ENCODE measurements at regions of chr2 and their contacts with region 1.

Region 1: DNA sequence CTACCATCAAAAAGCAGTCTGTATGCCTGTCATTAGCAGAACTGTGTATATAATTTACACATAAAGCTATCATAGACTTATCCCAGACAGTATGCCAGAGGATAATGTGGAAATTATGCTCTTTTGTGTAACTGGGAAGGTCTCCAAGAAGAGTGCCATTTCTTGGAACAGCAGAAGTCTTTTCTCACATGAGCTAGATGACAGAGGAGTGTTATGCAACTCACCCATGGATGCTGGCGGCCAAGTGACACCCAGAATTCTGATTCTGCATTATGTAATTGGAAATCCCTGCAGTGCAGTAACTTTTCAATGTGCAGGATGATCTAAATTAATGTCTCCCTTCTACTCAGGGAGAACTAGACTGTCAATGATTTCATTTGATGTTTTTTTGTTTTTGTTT is 160.0 kb downstream of the UBE2E3 start:
- DNase-seq: no peak
- H3K4me3 Mint-ChIP-seq: peak overlapping the region; percentile 3
- H3K27ac Mint-ChIP-seq: peak overlapping the region; percentile 74
- H3K4me1 Mint-ChIP-seq: peaks cover 63% of the 10 kb centered on the region
- H3K27me3 Mint-ChIP-seq: no peaks in the 10 kb centered on the region

Region 2: GRCh38 chr2:181123798-181124231 is 16.6 kb before region 1 on chr2:
- CTCF ChIA-PET with region 1: interaction called, 6 read pairs
- POLR2A ChIA-PET with region 1: interaction called, 8 read pairs
- intact Hi-C with region 1: loop called (anchors 1 kb)
- DNase-seq: peak; percentile 67
- H3K4me3 Mint-ChIP-seq: peak overlapping the region; percentile 74
- H3K27ac Mint-ChIP-seq: peak overlapping the region; percentile 92
- H3K4me1 Mint-ChIP-seq: peaks cover 60% of the 10 kb centered on the region
- H3K27me3 Mint-ChIP-seq: no peaks in the 10 kb centered on the region

Region 3: DNA sequence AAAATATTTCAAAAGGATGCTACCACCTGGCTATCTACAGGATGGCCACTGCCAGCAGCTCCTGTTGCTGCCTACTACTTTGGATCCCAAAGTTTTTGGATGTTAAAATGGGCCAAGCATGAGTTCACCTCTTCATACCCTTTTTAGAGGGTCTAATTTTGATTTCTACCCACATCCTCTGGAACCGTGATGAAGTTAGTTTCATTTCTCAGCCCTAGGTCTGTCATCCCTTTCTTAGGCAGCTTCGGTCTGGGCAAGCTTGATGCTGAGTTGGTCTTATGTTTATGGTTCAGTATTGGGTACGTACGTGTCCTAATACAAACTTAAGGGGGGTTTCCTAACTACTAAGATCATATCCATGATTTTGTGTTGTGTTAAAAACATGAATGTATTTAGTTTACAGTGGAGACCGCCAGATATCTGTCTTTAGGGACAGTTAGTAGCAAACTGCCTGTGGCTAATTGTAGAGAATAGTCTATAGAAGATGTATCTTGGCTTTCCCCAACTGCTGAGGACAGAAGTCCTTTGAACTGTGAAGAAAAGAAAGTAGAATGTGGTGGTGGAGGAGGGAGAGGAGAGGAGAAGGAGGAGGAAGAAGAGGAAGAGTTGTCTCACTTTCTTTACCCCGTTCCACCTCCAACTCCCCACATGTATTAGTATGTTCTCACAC is 24.9 kb after region 1 on chr2:
- CTCF ChIA-PET with region 1: interaction called, 3 read pairs
- POLR2A ChIA-PET with region 1: interaction called, 3 read pairs
- intact Hi-C with region 1: loop called (anchors 1 kb)
- DNase-seq: peak; percentile 35
- H3K4me3 Mint-ChIP-seq: peak overlapping the region; percentile 59
- H3K27ac Mint-ChIP-seq: peak overlapping the region; percentile 90
- H3K4me1 Mint-ChIP-seq: peaks cover 59% of the 10 kb centered on the region
- H3K27me3 Mint-ChIP-seq: no peaks in the 10 kb centered on the region

Region 4: DNA sequence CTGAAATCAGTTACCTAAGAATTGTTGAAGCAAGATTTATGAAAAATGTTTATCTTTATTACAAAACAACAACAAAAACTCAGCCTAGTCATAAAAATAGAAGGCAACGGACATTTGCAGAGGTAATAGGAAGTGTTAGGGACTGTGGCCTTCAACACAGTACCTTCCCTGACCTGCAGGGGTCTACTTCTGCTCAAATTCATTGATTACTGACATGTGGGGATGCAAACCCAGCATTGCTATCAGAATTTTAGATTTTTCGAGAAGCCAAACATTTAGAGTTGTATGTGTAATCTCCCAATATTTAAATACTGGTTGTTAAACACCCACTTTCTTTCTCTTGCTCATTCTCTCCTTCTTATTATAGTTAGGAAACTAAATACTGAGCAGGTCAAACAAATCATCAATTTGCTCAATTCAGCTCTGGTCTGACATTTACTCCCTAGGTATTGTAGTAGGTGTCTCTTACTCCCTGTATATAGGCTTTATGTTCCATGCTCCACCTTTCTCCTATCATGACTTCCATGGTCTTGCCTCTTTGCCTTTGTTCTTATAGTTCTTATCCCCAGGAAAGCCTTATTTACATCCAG is 38.5 kb after region 1 on chr2:
- CTCF ChIA-PET with region 1: interaction called, 3 read pairs
- POLR2A ChIA-PET with region 1: no interaction called
- intact Hi-C with region 1: loop called (anchors 5 kb)
- DNase-seq: peak; percentile 55
- H3K4me3 Mint-ChIP-seq: no peak overlapping the region
- H3K27ac Mint-ChIP-seq: peak overlapping the region; percentile 73
- H3K4me1 Mint-ChIP-seq: peaks cover 46% of the 10 kb centered on the region
- H3K27me3 Mint-ChIP-seq: no peaks in the 10 kb centered on the region

Region 5: GRCh38 chr2:181224866-181225265 is 84.5 kb after region 1 on chr2:
- CTCF ChIA-PET with region 1: no interaction called
- POLR2A ChIA-PET with region 1: no interaction called
- intact Hi-C with region 1: loop called (anchors 1 kb)
- DNase-seq: no peak
- H3K4me3 Mint-ChIP-seq: peak overlapping the region; percentile 59
- H3K27ac Mint-ChIP-seq: peak overlapping the region; percentile 87
- H3K4me1 Mint-ChIP-seq: peaks cover 24% of the 10 kb centered on the region
- H3K27me3 Mint-ChIP-seq: no peaks in the 10 kb centered on the region

Region 6: GRCh38 chr2:181275643-181276070 is 135.2 kb after region 1 on chr2:
- CTCF ChIA-PET with region 1: interaction called, 3 read pairs
- POLR2A ChIA-PET with region 1: no interaction called
- intact Hi-C with region 1: loop called (anchors 1 kb)
- DNase-seq: peak; percentile 33
- H3K4me3 Mint-ChIP-seq: no peak overlapping the region
- H3K27ac Mint-ChIP-seq: peak overlapping the region; percentile 71
- H3K4me1 Mint-ChIP-seq: peaks cover 41% of the 10 kb centered on the region
- H3K27me3 Mint-ChIP-seq: no peaks in the 10 kb centered on the region

Region 7: GRCh38 chr2:181646415-181646987 is 506.1 kb after region 1 on chr2:
- CTCF ChIA-PET with region 1: no interaction called
- POLR2A ChIA-PET with region 1: no interaction called
- intact Hi-C with region 1: no loop called
- DNase-seq: no peak
- H3K4me3 Mint-ChIP-seq: no peak overlapping the region
- H3K27ac Mint-ChIP-seq: no peak overlapping the region
- H3K4me1 Mint-ChIP-seq: no peaks in the 10 kb centered on the region
- H3K27me3 Mint-ChIP-seq: peaks cover 28% of the 10 kb centered on the region

Region 8: DNA sequence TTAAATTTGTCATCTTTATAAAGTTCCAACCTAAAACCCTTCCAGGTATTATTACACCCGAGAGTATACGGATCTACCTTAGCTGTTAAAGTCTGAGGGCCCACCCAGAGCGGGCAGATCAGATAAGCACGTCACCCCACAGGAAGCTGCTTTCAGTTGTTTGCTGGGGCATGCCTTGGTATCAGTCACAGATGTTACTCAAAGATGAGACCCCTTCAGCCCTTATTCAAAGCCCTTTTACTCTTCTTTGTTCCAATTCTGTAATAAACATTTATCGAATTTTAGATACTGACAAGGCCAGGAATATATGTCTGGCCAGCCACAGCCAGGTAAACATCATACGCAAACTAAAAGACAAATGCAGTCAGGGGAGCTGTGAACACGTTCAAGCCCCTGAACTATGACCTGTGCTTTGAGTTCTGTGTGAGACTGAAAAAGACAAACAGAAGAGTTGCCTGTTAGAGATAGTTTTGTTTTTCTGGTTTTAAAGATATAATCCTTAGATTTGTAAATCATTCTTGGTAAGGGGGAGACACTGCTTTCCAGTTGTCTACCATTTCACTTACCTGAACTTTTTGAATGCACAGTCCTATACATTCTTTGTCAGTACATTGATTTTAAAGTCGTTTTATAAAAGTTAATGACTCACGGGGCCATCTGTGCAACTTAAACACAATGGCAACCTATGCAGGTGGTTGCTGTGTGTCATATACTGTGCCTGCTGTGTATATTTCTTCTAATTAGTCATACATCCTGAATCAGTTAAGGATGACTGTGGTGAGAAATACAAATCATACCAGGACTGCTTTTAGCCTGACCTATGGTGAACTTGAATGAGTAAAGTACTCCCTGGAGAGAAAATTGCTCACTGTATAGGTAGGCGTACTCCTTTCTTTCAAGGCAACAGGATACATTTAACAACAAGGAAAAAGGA is 650.6 kb after region 1 on chr2:
- CTCF ChIA-PET with region 1: no interaction called
- POLR2A ChIA-PET with region 1: no interaction called
- intact Hi-C with region 1: loop called (anchors 1 kb)
- DNase-seq: peak; percentile 52
- H3K4me3 Mint-ChIP-seq: no peak overlapping the region
- H3K27ac Mint-ChIP-seq: peak overlapping the region; percentile 46
- H3K4me1 Mint-ChIP-seq: peaks cover 19% of the 10 kb centered on the region
- H3K27me3 Mint-ChIP-seq: peaks cover 12% of the 10 kb centered on the region